CD4-positive, alpha-beta T cell (primary cell): ENCODE measurements at regions of chr14 and their contacts with region 1.

Region 1: GRCh38 chr14:73713803-73714655 is at the start of gene PNMA1:
- DNase-seq: peak; percentile 75 to 95 (median 82)
- ATAC-seq: peak; percentile 68
- H3K4me3 ChIP-seq: peak within 1 kb of the TSS; percentile 87
- H3K4me3 Mint-ChIP-seq: peak within 1 kb of the TSS; percentile 96
- H3K27ac ChIP-seq: peak within 1 kb of the TSS; percentile 73 to 77
- H3K27ac Mint-ChIP-seq: peak within 1 kb of the TSS; percentile 92
- H3K4me1 ChIP-seq: peaks cover 33% of the 10 kb centered on the region
- H3K4me1 Mint-ChIP-seq: peaks cover 33% of the 10 kb centered on the region
- H3K27me3 ChIP-seq: no peaks in the 10 kb centered on the region
- H3K27me3 Mint-ChIP-seq: no peaks in the 10 kb centered on the region
- CTCF ChIP-seq: no peak
- total RNA-seq, gene PNMA1: 52.6 to 55.9 TPM

Region 2: GRCh38 chr14:73644531-73645247 is 69.3 kb before region 1 on chr14 and contains the start of gene DNAL1:
- CTCF ChIA-PET with region 1: no interaction called
- POLR2A ChIA-PET with region 1: interaction called, 17 read pairs
- intact Hi-C with region 1: loop called in 1 of 2 experiments (anchors 1 kb)
- DNase-seq: peak; percentile 82 to 96 (median 88)
- ATAC-seq: peak; percentile 99
- H3K4me3 ChIP-seq: peak within 1 kb of the TSS; percentile 88
- H3K4me3 Mint-ChIP-seq: peak within 1 kb of the TSS; percentile 91
- H3K27ac ChIP-seq: peak within 1 kb of the TSS; percentile 39 to 63
- H3K27ac Mint-ChIP-seq: peak within 1 kb of the TSS; percentile 76
- H3K4me1 ChIP-seq: peaks cover 13% of the 10 kb centered on the region
- H3K4me1 Mint-ChIP-seq: peaks cover 20% of the 10 kb centered on the region
- H3K27me3 ChIP-seq: no peaks in the 10 kb centered on the region
- H3K27me3 Mint-ChIP-seq: no peaks in the 10 kb centered on the region
- CTCF ChIP-seq: no peak
- total RNA-seq, gene DNAL1: 2.9 to 3.7 TPM

Region 3: DNA sequence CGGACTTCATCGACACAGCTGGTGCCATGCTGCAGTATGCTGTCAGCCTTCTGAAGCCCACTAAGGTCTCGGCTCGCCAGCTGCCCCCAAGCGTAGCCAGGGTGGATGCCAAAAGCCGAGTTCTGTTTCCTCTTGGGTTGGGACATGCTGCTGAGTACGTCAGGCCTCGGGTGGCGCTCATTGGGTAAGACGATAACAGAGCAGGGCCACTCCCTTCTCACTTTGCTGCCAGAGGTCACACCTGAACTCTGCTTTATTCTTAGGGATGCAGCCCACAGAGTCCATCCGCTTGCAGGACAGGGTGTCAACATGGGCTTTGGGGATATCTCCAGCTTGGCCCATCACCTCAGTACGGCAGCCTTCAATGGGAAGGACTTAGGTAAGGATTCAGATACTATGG is 247.2 kb after region 1 on chr14:
- CTCF ChIA-PET with region 1: no interaction called
- POLR2A ChIA-PET with region 1: no interaction called
- intact Hi-C with region 1: no loop called
- DNase-seq: no peak
- ATAC-seq: no peak
- H3K4me3 ChIP-seq: no peak overlapping the region
- H3K4me3 Mint-ChIP-seq: no peak overlapping the region
- H3K27ac ChIP-seq: no peak overlapping the region
- H3K27ac Mint-ChIP-seq: no peak overlapping the region
- H3K4me1 ChIP-seq: no peaks in the 10 kb centered on the region
- H3K4me1 Mint-ChIP-seq: no peaks in the 10 kb centered on the region
- H3K27me3 ChIP-seq: no peaks in the 10 kb centered on the region
- H3K27me3 Mint-ChIP-seq: no peaks in the 10 kb centered on the region
- CTCF ChIP-seq: no peak